CD4-positive, alpha-beta memory T cell (primary cell): ENCODE measurements at regions of chr6 and their contacts with region 1.

Region 1: DNA sequence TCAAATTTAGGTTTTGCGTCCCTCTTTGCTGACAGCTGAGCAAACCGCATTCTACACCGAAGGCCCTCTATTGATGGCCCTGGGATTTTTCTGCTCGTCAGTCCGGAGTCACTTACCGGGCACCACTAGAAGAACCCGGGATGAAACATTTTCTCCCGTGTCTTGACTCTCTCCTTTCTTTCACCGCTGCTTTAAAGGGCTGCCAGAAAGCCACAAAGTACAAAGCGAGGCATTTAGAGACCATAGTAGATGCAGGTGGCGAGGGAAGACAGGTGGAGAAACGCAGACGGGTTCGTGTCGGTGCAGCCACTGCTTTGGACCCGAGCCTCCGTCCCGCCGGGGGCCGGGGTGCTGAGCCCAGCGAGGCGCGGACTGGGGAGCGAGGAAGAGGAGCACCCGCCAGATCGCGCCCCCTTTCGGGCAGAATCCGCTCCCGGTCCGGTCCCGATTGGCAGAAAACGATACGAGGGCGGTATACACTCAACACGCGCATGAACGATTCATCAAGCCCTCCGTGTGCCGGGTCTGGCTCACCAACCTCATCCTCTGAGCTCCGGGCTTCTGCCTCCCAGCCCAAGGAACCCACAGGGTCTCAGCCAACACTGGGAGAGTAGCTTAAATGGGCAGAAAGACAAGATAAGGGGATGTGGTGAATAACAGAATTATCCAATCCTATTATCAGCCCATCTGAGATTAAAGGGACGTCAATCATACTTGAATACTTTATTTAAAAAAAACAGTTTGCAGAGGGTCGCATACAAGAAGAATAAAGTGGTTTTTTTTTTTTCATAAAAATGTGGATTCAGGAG is 84.9 kb downstream of the TRIM27 start:
- DNase-seq: peak; percentile 74 to 82 (median 76)
- H3K4me3 ChIP-seq: peak overlapping the region; percentile 72 to 80
- H3K4me3 Mint-ChIP-seq: peak overlapping the region; percentile 91 to 97 (median 94)
- H3K27ac ChIP-seq: peak overlapping the region; percentile 42
- H3K27ac Mint-ChIP-seq: peak overlapping the region; percentile 70 to 100 (median 92)
- H3K4me1 ChIP-seq: peaks cover 13% of the 10 kb centered on the region
- H3K4me1 Mint-ChIP-seq: peaks cover 12 to 24% (median 18%) of the 10 kb centered on the region in 4 donors
- H3K27me3 ChIP-seq: no peaks in the 10 kb centered on the region
- H3K27me3 Mint-ChIP-seq: peaks cover 22 to 28% of the 10 kb centered on the region in 2 donors

Region 2: DNA sequence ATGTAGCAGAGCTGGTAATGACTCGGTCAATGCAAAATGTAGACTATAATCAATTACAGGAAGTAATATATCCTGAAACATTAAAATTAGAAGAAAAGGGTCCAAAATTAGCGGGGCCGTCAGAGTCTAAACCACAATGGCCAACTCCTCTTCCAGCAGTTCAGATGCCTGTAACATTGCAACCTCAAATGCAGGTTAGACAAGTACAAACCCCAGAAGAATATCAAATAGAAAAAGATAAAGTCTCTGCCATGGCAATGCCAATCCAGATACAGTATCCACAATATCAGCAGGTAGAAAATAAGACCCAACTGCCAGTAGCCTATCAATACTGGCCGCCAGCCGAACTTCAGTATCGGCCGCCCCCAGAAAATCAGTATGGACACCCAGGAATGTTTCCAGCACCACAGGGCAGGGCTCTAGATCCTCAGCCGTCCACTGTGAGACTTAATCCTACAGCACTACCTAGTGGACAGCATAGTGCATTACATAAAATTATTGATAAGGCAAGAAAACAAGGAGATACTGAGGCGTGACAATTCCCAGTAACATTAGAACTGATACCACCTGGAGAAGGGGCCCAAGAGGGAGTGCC is 154.8 kb before region 1 on chr6:
- CTCF ChIA-PET with region 1: interaction called, 9 read pairs
- POLR2A ChIA-PET with region 1: no interaction called
- intact Hi-C with region 1: loop called (anchors 1 kb)
- DNase-seq: peak in 4 of 5 donors; percentile 35 to 52 (median 44)
- H3K4me3 ChIP-seq: no peak overlapping the region
- H3K4me3 Mint-ChIP-seq: peak overlapping the region in 5 of 8 donors; percentile 14 to 76 (median 66)
- H3K27ac ChIP-seq: no peak overlapping the region
- H3K27ac Mint-ChIP-seq: peak overlapping the region in 1 of 7 donors; percentile 38
- H3K4me1 ChIP-seq: peaks cover 15% of the 10 kb centered on the region
- H3K4me1 Mint-ChIP-seq: peaks cover 9 to 21% (median 17%) of the 10 kb centered on the region in 4 donors
- H3K27me3 ChIP-seq: peaks cover 16% of the 10 kb centered on the region
- H3K27me3 Mint-ChIP-seq: peaks cover 38 to 49% of the 10 kb centered on the region in 2 donors

Region 3: GRCh38 chr6:28880894-28881780 is 42.3 kb after region 1 on chr6:
- CTCF ChIA-PET with region 1: interaction called, 52 read pairs
- POLR2A ChIA-PET with region 1: interaction called, 17 read pairs
- intact Hi-C with region 1: loop called (anchors 1 kb)
- DNase-seq: peak in 4 of 5 donors; percentile 21 to 46 (median 37)
- H3K4me3 ChIP-seq: no peak overlapping the region
- H3K4me3 Mint-ChIP-seq: peak overlapping the region; percentile 62 to 83 (median 76)
- H3K27ac ChIP-seq: no peak overlapping the region
- H3K27ac Mint-ChIP-seq: peak overlapping the region in 6 of 7 donors; percentile 18 to 94 (median 78)
- H3K4me1 ChIP-seq: peaks cover 24% of the 10 kb centered on the region
- H3K4me1 Mint-ChIP-seq: peaks cover 30 to 39% (median 35%) of the 10 kb centered on the region in 4 donors
- H3K27me3 ChIP-seq: no peaks in the 10 kb centered on the region
- H3K27me3 Mint-ChIP-seq: peaks cover 12 to 23% of the 10 kb centered on the region in 2 donors

Region 4: GRCh38 chr6:28940858-28941680 is 102.2 kb after region 1 on chr6:
- CTCF ChIA-PET with region 1: interaction called, 59 read pairs
- POLR2A ChIA-PET with region 1: interaction called, 39 read pairs
- intact Hi-C with region 1: loop called (anchors 1 kb)
- DNase-seq: peak; percentile 85 to 88 (median 86)
- H3K4me3 ChIP-seq: peak overlapping the region; percentile 62 to 77
- H3K4me3 Mint-ChIP-seq: peak overlapping the region; percentile 87 to 98 (median 95)
- H3K27ac ChIP-seq: peak overlapping the region; percentile 39
- H3K27ac Mint-ChIP-seq: peak overlapping the region; percentile 85 to 97 (median 94)
- H3K4me1 ChIP-seq: peaks cover 35% of the 10 kb centered on the region
- H3K4me1 Mint-ChIP-seq: peaks cover 26 to 57% (median 46%) of the 10 kb centered on the region in 4 donors
- H3K27me3 ChIP-seq: no peaks in the 10 kb centered on the region
- H3K27me3 Mint-ChIP-seq: peaks cover 0 to 10% of the 10 kb centered on the region in 2 donors

Region 5: GRCh38 chr6:29005183-29005885 is 166.5 kb after region 1 on chr6 and contains the start of gene ZNF311:
- CTCF ChIA-PET with region 1: interaction called, 197 read pairs
- POLR2A ChIA-PET with region 1: interaction called, 4 read pairs
- intact Hi-C with region 1: no loop called
- DNase-seq: peak; percentile 31 to 50 (median 41)
- H3K4me3 ChIP-seq: peak within 1 kb of the TSS; percentile 21 to 52
- H3K4me3 Mint-ChIP-seq: peak within 1 kb of the TSS; percentile 90 to 97 (median 93)
- H3K27ac ChIP-seq: no peak within 1 kb of the TSS
- H3K27ac Mint-ChIP-seq: peak within 1 kb of the TSS; percentile 42 to 91 (median 81)
- H3K4me1 ChIP-seq: peaks cover 18% of the 10 kb centered on the region
- H3K4me1 Mint-ChIP-seq: peaks cover 12 to 31% (median 16%) of the 10 kb centered on the region in 4 donors
- H3K27me3 ChIP-seq: no peaks in the 10 kb centered on the region
- H3K27me3 Mint-ChIP-seq: no peaks in the 10 kb centered on the region
- total RNA-seq, gene ZNF311: 0.33 to 0.64 TPM